ENCODE measurements at regions of chr5 and their contacts with region 1.

Region 1: GRCh38 chr5:53095931-53096525 is 13.5 kb downstream of the MOCS2 start:
- DNase-seq: peak; percentile 75

Region 2: GRCh38 chr5:52956915-52957747 is 138.9 kb before region 1 on chr5:
- in situ Hi-C with region 1: loop called (anchors 10 kb)
- DNase-seq: no peak

Measured in SK-MEL-5 (cell line).